ENCODE measurements at regions of chr17 and their contacts with region 1.

Region 1: DNA sequence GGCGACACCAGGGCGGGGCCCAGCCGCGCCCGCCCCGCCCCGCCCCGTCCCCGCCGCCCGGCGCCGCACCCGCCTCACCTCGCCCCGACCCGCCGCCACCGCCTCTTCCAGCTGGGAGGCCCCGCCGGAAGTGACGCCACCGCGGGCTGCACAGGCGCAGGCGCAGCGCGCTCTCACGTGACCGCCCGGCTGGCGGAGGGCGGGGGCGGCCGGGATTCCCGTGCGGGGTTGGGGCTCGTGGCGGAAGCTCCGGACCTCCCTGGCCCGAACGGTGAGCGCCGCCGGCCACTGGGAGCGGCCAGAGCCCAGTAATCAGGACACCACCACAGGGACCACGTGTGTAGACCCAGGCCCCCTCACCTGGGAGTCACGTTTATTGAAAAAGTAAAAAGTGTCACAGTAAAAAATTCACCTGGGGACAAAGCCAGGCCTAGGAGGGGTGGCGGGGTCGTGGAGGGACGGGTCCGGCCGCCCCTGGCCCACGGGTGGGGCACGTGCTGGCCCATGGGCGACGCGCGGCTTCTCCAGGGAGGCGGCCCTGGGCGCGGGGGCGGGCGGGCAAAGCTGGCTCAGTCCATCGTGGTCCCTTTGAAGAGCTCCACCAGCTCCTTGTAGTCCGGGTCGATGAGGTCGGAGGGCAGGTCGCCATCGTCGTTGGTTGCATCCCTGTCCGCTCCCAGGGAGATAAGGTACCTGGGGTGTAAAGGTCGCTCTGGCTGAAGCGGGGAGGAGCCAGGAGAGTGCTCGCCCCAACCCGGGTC is at the start of gene MCRIP1:
- DNase-seq: peak; percentile 80 to 97 (median 94)
- ATAC-seq: peak; percentile 74
- H3K4me3 ChIP-seq: peak within 1 kb of the TSS; percentile 71 to 80
- H3K4me3 Mint-ChIP-seq: peak within 1 kb of the TSS; percentile 94
- H3K27ac ChIP-seq: peak within 1 kb of the TSS; percentile 90 to 93
- H3K27ac Mint-ChIP-seq: peak within 1 kb of the TSS; percentile 96
- H3K4me1 ChIP-seq: peaks cover 17% of the 10 kb centered on the region
- H3K4me1 Mint-ChIP-seq: peaks cover 23% of the 10 kb centered on the region
- H3K27me3 ChIP-seq: no peaks in the 10 kb centered on the region
- H3K27me3 Mint-ChIP-seq: no peaks in the 10 kb centered on the region
- CTCF ChIP-seq: no peak
- total RNA-seq, gene MCRIP1: 32.2 to 34.0 TPM

Region 2: DNA sequence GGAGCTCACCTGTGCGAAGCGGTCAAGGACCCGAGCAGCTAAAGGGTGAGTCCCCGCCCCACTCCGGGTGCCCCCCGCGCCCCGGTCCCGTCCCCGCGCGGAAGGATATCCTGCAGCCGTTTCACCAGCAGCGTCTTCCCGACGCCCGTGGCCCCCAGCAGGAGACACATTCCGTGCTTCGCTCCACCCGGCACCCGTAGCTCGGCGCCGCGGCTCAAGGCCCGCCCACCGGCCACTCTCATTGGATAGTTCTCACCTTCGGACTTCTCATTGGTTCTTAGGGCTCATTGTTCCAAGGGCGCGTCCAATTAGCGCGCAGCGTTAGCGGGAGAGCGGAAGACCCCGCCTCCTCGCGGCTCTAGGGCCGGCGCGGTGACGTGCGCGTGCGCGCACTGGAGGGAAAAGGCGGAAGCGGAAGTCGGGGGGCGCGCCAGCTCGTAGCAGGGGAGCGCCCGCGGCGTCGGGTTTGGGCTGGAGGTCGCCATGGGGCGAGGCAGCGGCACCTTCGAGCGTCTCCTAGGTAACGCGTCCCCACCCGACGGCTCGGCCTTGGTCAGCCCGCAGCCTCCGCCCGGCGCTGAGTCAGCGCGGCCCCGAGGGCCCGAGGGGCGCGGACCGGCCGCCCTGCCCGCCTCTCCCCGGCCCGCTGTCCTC is 149.6 kb before region 1 on chr17 and contains the starts of genes ARL16 and HGS:
- CTCF ChIA-PET with region 1: no interaction called
- POLR2A ChIA-PET with region 1: no interaction called
- intact Hi-C with region 1: loop called in 1 of 2 experiments (anchors 1 kb)
- DNase-seq: peak; percentile 95 to 99 (median 97)
- ATAC-seq: peak; percentile 98
- H3K4me3 ChIP-seq: peak within 1 kb of the TSS; percentile 89 to 98
- H3K4me3 Mint-ChIP-seq: peak within 1 kb of the TSS; percentile 89
- H3K27ac ChIP-seq: peak within 1 kb of the TSS; percentile 57 to 77
- H3K27ac Mint-ChIP-seq: peak within 1 kb of the TSS; percentile 88
- H3K4me1 ChIP-seq: peaks cover 27% of the 10 kb centered on the region
- H3K4me1 Mint-ChIP-seq: peaks cover 32% of the 10 kb centered on the region
- H3K27me3 ChIP-seq: no peaks in the 10 kb centered on the region
- H3K27me3 Mint-ChIP-seq: no peaks in the 10 kb centered on the region
- CTCF ChIP-seq: no peak
- total RNA-seq, gene ARL16: 14.3 to 16.4 TPM
- total RNA-seq, gene HGS: 121 to 126 TPM

Region 3: DNA sequence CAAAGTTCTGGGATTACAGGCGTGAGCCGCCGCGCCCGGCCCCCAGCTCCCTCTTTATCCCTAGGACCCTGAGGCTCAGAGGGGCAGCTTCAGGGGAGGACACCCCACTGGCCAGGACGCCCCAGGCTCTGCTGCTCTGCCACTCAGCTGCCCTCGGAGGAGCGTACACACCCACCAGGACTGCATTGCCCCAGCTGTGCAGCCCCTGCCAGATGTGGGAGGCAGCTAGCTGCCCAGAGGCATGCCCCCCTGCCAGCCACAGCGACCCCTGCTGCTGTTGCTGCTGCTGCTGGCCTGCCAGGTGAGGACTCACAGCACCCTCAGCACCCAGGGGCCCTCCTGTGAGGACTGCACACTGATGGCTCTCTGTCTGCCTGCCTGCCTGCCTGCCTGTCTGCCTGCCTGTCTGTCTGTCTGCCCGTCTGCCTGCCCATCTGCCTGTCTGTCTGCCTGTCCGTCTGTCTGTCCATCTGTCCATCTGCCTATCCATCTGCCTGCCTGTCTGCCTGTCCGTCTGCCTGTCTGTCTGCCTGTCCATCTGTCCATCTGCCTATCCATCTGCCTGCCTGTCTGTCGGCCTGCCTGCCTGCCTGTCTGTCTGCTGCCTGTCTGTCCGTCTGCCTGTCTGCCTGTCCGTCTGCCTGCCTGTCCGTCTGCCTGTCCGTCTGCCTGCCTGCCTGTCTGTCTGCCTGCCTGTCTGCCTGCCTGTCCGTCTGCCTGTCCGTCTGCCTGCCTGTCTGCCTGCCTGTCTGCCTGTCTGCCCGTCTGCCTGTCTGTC is 24.4 kb before region 1 on chr17:
- CTCF ChIA-PET with region 1: no interaction called
- POLR2A ChIA-PET with region 1: no interaction called
- intact Hi-C with region 1: no loop called
- DNase-seq: peak in 2 of 9 experiments; percentile 14 to 39
- ATAC-seq: no peak
- H3K4me3 ChIP-seq: no peak overlapping the region
- H3K4me3 Mint-ChIP-seq: no peak overlapping the region
- H3K27ac ChIP-seq: no peak overlapping the region
- H3K27ac Mint-ChIP-seq: no peak overlapping the region
- H3K4me1 ChIP-seq: no peaks in the 10 kb centered on the region
- H3K4me1 Mint-ChIP-seq: peaks cover 2% of the 10 kb centered on the region
- H3K27me3 ChIP-seq: peaks cover 0 to 18% of the 10 kb centered on the region in 2 experiments
- H3K27me3 Mint-ChIP-seq: peaks cover 17% of the 10 kb centered on the region
- CTCF ChIP-seq: no peak

Region 4: DNA sequence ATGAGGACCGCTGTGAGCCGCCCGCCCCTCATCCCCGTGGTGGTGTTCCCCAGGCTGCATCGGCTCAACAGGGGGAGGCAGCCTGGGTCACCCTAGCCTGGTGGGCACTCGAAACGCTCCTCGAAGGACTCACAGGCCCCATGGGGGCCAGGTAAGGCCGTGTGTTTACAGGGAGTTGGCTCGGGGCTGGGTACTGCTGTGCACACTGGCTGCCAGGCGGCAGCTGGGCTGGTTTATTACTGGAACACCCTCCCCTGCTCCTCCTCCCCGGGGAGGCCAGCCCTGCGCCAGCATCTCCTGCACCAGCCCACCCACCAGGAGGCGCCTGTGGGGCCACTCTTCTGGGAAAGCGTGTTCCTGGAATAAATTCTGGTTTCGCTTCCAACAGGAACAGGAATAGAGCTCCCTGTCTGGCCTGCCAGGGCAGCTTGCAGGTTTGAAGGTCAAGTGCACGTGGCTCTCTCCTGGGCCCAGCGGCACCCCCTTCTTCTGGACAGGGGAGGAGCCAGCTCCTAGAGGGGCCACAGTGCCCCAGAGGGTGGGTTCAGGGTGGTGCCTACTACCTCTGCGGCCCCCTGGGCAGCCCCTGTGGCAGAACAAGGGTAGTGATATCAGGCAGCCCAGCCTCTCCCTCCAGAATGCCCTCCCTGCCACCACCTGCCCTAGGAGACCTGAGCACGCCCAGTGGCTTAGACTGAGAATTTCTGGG is 11.6 kb before region 1 on chr17:
- CTCF ChIA-PET with region 1: no interaction called
- POLR2A ChIA-PET with region 1: no interaction called
- intact Hi-C with region 1: no loop called
- DNase-seq: no peak
- ATAC-seq: no peak
- H3K4me3 ChIP-seq: no peak overlapping the region
- H3K4me3 Mint-ChIP-seq: no peak overlapping the region
- H3K27ac ChIP-seq: no peak overlapping the region
- H3K27ac Mint-ChIP-seq: no peak overlapping the region
- H3K4me1 ChIP-seq: no peaks in the 10 kb centered on the region
- H3K4me1 Mint-ChIP-seq: peaks cover 4% of the 10 kb centered on the region
- H3K27me3 ChIP-seq: no peaks in the 10 kb centered on the region
- H3K27me3 Mint-ChIP-seq: peaks cover 3% of the 10 kb centered on the region
- CTCF ChIP-seq: no peak

Region 5: DNA sequence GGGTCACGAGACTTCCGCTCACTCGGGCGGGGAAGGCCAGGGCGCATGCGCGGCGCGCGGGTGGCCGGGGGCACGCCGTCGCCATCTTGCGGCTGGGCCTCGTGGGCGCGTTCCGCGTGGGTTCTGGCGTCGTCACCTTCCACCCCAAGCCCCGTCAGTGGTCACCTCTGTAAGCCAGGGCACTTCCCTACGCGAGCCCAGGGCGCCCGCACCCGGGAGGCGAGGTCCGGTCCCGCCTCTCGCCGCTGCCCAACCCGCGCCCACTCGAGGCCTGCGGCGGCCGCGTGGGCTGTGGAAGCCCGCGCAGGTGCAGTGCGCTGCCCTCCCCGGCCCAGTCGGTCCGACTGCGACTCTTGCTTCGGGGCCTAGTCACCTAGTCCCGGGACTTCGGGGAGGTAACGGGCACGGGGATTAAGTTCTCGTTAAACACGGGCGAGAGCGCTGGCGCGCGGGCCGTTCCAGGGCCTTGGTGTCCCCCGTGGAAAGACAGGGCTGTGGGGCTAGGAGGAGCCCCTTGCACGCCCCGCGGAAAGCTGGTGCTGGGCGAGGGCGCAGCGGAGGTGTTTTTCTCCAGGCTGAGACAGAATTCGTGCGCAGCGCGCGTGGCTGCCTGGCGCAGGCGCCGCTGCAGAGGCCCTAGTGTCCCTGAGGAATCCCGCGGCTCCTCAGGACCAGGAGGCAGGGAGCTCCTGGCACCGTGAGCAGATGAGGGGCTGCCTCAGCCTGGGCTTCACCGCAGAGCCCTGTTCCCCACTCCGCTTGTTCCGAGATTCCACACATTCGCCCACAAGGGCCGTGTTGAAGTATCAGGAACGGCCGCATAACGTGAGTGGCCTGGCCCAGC is 38.3 kb after region 1 on chr17:
- CTCF ChIA-PET with region 1: no interaction called
- POLR2A ChIA-PET with region 1: interaction called, 7 read pairs
- intact Hi-C with region 1: loop called (anchors 1 to 5 kb)
- DNase-seq: peak; percentile 90 to 97 (median 96)
- ATAC-seq: peak; percentile 29
- H3K4me3 ChIP-seq: peak overlapping the region; percentile 93 to 94
- H3K4me3 Mint-ChIP-seq: peak overlapping the region; percentile 87
- H3K27ac ChIP-seq: peak overlapping the region; percentile 96 to 98
- H3K27ac Mint-ChIP-seq: peak overlapping the region; percentile 96
- H3K4me1 ChIP-seq: peaks cover 39% of the 10 kb centered on the region
- H3K4me1 Mint-ChIP-seq: peaks cover 40% of the 10 kb centered on the region
- H3K27me3 ChIP-seq: no peaks in the 10 kb centered on the region
- H3K27me3 Mint-ChIP-seq: no peaks in the 10 kb centered on the region
- CTCF ChIP-seq: no peak

Region 6: GRCh38 chr17:81917565-81918332 is 84.4 kb after region 1 on chr17 and contains the start of gene SIRT7:
- CTCF ChIA-PET with region 1: no interaction called
- POLR2A ChIA-PET with region 1: no interaction called
- intact Hi-C with region 1: loop called in 1 of 2 experiments (anchors 5 kb)
- DNase-seq: peak; percentile 67 to 92 (median 82)
- ATAC-seq: peak; percentile 93
- H3K4me3 ChIP-seq: peak within 1 kb of the TSS; percentile 63 to 69
- H3K4me3 Mint-ChIP-seq: peak within 1 kb of the TSS; percentile 91
- H3K27ac ChIP-seq: peak within 1 kb of the TSS; percentile 51 to 75
- H3K27ac Mint-ChIP-seq: peak within 1 kb of the TSS; percentile 88
- H3K4me1 ChIP-seq: peaks cover 14% of the 10 kb centered on the region
- H3K4me1 Mint-ChIP-seq: peaks cover 27% of the 10 kb centered on the region
- H3K27me3 ChIP-seq: no peaks in the 10 kb centered on the region
- H3K27me3 Mint-ChIP-seq: no peaks in the 10 kb centered on the region
- CTCF ChIP-seq: no peak
- total RNA-seq, gene SIRT7: 75.2 to 76.1 TPM

Measured in CD8-positive, alpha-beta T cell (primary cell).